Prostate gland (tissue), 2 donors: ENCODE measurements at regions of chr3 and their contacts with region 1.

Region 1: GRCh38 chr3:36957862-36958686 is 13.2 kb upstream of the TRANK1 start:
- DNase-seq: no peak
- H3K4me3 ChIP-seq: no peak overlapping the region
- H3K27ac ChIP-seq: no peak overlapping the region
- H3K4me1 ChIP-seq: no peaks in the 10 kb centered on the region
- H3K27me3 ChIP-seq: no peaks in the 10 kb centered on the region
- CTCF ChIP-seq: no peak
- POLR2A ChIP-seq: no peak

Region 2: GRCh38 chr3:36729204-36730056 is 228.6 kb before region 1 on chr3:
- intact Hi-C with region 1: loop called (anchors 5 kb)
- DNase-seq: no peak
- H3K4me3 ChIP-seq: no peak overlapping the region
- H3K27ac ChIP-seq: no peak overlapping the region
- H3K4me1 ChIP-seq: no peaks in the 10 kb centered on the region
- H3K27me3 ChIP-seq: peaks cover 2% of the 10 kb centered on the region
- CTCF ChIP-seq: peak; percentile 17 to 87 (median 69)
- POLR2A ChIP-seq: no peak

Region 3: GRCh38 chr3:36903119-36903882 is 54.8 kb before region 1 on chr3:
- intact Hi-C with region 1: loop called (anchors 2 kb)
- DNase-seq: no peak
- H3K4me3 ChIP-seq: no peak overlapping the region
- H3K27ac ChIP-seq: no peak overlapping the region
- H3K4me1 ChIP-seq: no peaks in the 10 kb centered on the region
- H3K27me3 ChIP-seq: no peaks in the 10 kb centered on the region
- CTCF ChIP-seq: no peak
- POLR2A ChIP-seq: no peak